HCT116 (cell line): ENCODE measurements at regions of chr12 and their contacts with region 1.

Region 1: GRCh38 chr12:120428597-120429229 is 9.2 kb upstream of the COX6A1 start:
- DNase-seq: no peak
- ATAC-seq: no peak
- H3K4me3 ChIP-seq: no peak overlapping the region
- H3K27ac ChIP-seq: no peak overlapping the region
- H3K4me1 ChIP-seq: peaks cover 3 to 29% of the 10 kb centered on the region in 2 experiments; a peak in 3 of 4 replicates
- H3K27me3 ChIP-seq: no peaks in the 10 kb centered on the region
- CTCF ChIP-seq: no peak
- POLR2A ChIP-seq: no peak
- RAD21 ChIP-seq: no peak

Region 2: GRCh38 chr12:120376416-120376815 is 52.3 kb before region 1 on chr12:
- CTCF ChIA-PET with region 1: no interaction called
- POLR2A ChIA-PET with region 1: no interaction called
- RAD21 ChIA-PET with region 1: no interaction called
- intact Hi-C with region 1: loop called (anchors 5 kb)
- DNase-seq: no peak
- ATAC-seq: peak; percentile 56
- H3K4me3 ChIP-seq: no peak overlapping the region
- H3K27ac ChIP-seq: no peak overlapping the region
- H3K4me1 ChIP-seq: peaks cover 0 to 20% of the 10 kb centered on the region in 2 experiments; a peak in 2 of 4 replicates
- H3K27me3 ChIP-seq: 0 out of 2 replicates have a peak, but pooled peaks cover 5% of the 10 kb centered on the region
- CTCF ChIP-seq: no peak
- POLR2A ChIP-seq: no peak
- RAD21 ChIP-seq: no peak